Naive thymus-derived CD4-positive, alpha-beta T cell (primary cell): ENCODE measurements at regions of chr20 and their contacts with region 1.

Region 1: GRCh38 chr20:3051385-3052019 is 5.7 kb downstream of the MRPS26 start:
- DNase-seq: no peak
- ATAC-seq: peak; percentile 33
- H3K4me3 ChIP-seq: no peak overlapping the region
- H3K4me3 Mint-ChIP-seq: no peak overlapping the region
- H3K27ac ChIP-seq: no peak overlapping the region
- H3K27ac Mint-ChIP-seq: peak overlapping the region in 2 of 9 donors; percentile 22 to 32
- H3K4me1 ChIP-seq: peaks cover 0 to 5% of the 10 kb centered on the region in 2 donors
- H3K4me1 Mint-ChIP-seq: peaks cover 6 to 16% (median 14%) of the 10 kb centered on the region in 7 donors
- H3K27me3 ChIP-seq: no peaks in the 10 kb centered on the region
- H3K27me3 Mint-ChIP-seq: no peaks in the 10 kb centered on the region

Region 2: GRCh38 chr20:2706688-2707352 is 344.7 kb before region 1 on chr20:
- CTCF ChIA-PET with region 1: no interaction called
- POLR2A ChIA-PET with region 1: no interaction called
- intact Hi-C with region 1: no loop called
- DNase-seq: no peak
- ATAC-seq: no peak
- H3K4me3 ChIP-seq: no peak overlapping the region
- H3K4me3 Mint-ChIP-seq: peak overlapping the region in 1 of 10 donors; percentile 49
- H3K27ac ChIP-seq: no peak overlapping the region
- H3K27ac Mint-ChIP-seq: peak overlapping the region in 2 of 9 donors; percentile 76 to 82
- H3K4me1 ChIP-seq: no peaks in the 10 kb centered on the region
- H3K4me1 Mint-ChIP-seq: peaks cover 0 to 16% (median 0%) of the 10 kb centered on the region in 7 donors
- H3K27me3 ChIP-seq: no peaks in the 10 kb centered on the region
- H3K27me3 Mint-ChIP-seq: peaks cover 0 to 5% (median 0%) of the 10 kb centered on the region in 5 donors

Region 3: DNA sequence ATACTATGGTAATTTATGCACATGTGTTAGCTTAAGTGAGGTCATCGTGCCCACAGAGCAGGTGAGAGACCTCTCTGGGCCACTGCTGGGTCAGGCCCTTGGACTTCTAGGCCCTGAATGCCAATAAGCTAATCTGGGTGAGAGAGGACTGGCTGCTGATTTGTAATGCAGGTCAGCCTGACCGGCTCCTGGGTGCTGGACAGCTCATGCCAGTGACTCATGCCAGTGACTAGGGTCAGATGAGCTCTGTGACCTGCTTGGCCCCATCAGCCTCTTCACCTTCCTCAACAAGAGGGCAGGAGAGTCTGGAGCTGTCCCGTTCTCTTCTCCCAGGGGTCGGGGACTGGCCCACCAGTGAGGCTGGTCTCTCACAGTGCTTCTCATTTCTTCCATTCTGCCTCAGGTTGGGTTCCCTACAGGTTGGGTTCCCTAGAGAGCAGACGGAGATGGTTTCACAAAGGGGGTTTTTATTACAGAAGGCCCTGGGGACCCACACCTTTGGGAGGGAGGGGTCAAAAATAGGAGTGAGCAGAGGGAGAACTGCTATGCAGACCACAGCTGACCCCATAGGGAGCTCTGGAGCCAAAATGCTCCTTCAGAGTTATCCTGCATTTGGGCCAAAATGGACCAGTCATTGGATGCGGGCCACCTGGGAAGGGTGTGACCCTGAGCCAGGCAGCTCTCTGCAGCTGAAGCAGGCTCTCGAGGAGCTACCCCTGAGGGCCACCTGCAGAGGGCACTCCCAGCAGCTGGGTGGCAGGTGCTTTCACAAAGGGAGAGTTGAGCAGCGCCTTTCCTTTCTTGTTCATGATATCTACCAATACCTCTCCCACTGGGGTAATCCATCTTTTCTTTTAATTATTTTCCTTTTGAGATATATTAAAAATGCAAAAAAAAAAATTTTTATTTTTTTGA is 17.7 kb after region 1 on chr20:
- CTCF ChIA-PET with region 1: interaction called, 4 read pairs
- POLR2A ChIA-PET with region 1: interaction called, 4 read pairs
- intact Hi-C with region 1: loop called in 1 of 2 experiments (anchors 1 kb)
- DNase-seq: peak in 7 of 9 donors; percentile 52 to 73 (median 62)
- ATAC-seq: peak; percentile 61
- H3K4me3 ChIP-seq: no peak overlapping the region
- H3K4me3 Mint-ChIP-seq: peak overlapping the region in 1 of 10 donors; percentile 25
- H3K27ac ChIP-seq: no peak overlapping the region
- H3K27ac Mint-ChIP-seq: peak overlapping the region in 4 of 9 donors; percentile 32 to 77 (median 52)
- H3K4me1 ChIP-seq: peaks cover 0 to 17% of the 10 kb centered on the region in 2 donors
- H3K4me1 Mint-ChIP-seq: peaks cover 8 to 38% (median 27%) of the 10 kb centered on the region in 7 donors
- H3K27me3 ChIP-seq: no peaks in the 10 kb centered on the region
- H3K27me3 Mint-ChIP-seq: peaks cover 0 to 2% (median 0%) of the 10 kb centered on the region in 5 donors

Region 4: DNA sequence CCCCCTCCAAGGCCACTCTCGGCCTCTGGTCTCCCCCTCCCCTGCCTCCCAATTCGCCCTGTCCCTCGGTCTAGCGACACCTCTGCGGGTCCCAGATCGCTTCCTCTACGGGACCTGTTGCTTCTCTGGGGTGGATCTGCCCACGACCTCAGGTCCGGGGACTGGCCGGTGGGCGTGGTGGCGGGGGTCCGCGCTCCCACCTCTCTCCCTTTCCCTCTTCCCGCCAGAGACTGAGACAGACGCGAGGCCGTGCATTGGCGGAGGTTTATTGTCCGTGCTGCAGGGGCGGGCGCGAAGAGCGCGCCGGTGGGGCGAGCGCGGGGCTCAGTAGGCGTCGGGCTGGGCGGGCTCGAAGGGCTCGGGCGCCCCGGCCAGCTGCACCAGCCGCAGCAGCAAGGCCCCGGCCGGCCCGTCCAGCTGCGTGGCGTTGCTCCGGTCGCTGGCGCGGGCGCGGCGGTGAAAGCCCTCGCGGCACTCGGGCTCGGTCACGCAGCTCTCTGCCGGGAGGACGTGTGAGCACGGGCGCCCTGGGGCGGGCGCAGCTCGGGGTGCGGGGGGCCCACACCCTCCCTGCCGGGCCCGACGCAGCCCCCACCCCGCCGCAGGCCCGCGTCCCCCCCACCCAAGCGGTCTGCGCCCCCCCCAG is 30.9 kb after region 1 on chr20:
- CTCF ChIA-PET with region 1: no interaction called
- POLR2A ChIA-PET with region 1: interaction called, 4 read pairs
- intact Hi-C with region 1: loop called (anchors 1 kb)
- DNase-seq: peak in 1 of 9 donors; percentile 10
- ATAC-seq: peak; percentile 35
- H3K4me3 ChIP-seq: peak overlapping the region; percentile 24
- H3K4me3 Mint-ChIP-seq: peak overlapping the region; percentile 62 to 83 (median 72)
- H3K27ac ChIP-seq: no peak overlapping the region
- H3K27ac Mint-ChIP-seq: no peak overlapping the region
- H3K4me1 ChIP-seq: peaks cover 0 to 14% of the 10 kb centered on the region in 2 donors
- H3K4me1 Mint-ChIP-seq: peaks cover 11 to 19% (median 17%) of the 10 kb centered on the region in 7 donors
- H3K27me3 ChIP-seq: peaks cover 0 to 13% of the 10 kb centered on the region in 2 donors
- H3K27me3 Mint-ChIP-seq: peaks cover 8 to 62% (median 23%) of the 10 kb centered on the region in 5 donors

Region 5: DNA sequence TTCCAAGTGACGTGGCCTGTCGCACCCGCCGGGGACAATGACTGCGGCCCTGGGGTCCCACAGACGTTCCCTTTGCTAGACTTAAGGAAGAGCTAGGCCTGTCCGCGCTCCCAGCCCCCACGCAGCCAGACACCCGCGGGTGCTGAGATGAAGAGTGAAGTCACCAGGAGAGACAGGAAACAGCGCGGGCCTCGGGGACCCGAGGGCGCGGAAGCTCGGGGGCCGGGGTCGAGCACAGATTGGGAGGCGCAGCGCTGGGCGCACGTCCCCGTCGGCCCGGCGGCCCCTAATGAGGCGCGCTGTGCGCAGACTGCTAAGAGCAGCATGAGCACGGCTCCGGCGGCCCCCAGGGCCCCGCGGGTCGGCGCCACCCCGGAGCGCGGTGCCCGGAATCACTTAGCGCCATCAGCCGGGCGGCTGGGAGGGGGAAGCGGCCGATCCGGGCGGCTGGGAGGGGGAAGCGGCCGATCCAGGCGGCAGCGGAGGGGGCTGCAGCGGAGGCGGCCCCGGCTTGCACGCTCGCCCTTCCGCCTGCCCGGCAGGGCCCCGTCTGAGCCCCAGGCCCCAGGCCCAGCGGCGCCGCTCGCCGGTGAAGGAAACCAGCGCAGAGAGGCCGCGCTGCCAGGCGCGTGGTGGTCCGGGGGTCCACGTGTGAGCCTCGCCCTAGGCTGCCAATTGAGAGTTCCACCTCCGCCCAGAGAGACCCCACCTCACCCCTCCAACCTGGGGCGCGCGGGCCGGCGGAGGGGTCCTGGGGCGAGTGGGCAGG is 41.3 kb after region 1 on chr20:
- CTCF ChIA-PET with region 1: interaction called, 5 read pairs
- POLR2A ChIA-PET with region 1: interaction called, 6 read pairs
- intact Hi-C with region 1: loop called in 1 of 2 experiments (anchors 1 kb)
- DNase-seq: peak in 8 of 9 donors; percentile 41 to 75 (median 70)
- ATAC-seq: peak; percentile 27
- H3K4me3 ChIP-seq: peak overlapping the region; percentile 28
- H3K4me3 Mint-ChIP-seq: peak overlapping the region; percentile 78 to 97 (median 93)
- H3K27ac ChIP-seq: peak overlapping the region; percentile 95
- H3K27ac Mint-ChIP-seq: peak overlapping the region; percentile 88 to 100 (median 100)
- H3K4me1 ChIP-seq: peaks cover 0 to 24% of the 10 kb centered on the region in 2 donors
- H3K4me1 Mint-ChIP-seq: peaks cover 17 to 50% (median 31%) of the 10 kb centered on the region in 7 donors
- H3K27me3 ChIP-seq: no peaks in the 10 kb centered on the region
- H3K27me3 Mint-ChIP-seq: peaks cover 0 to 39% (median 0%) of the 10 kb centered on the region in 5 donors

Region 6: DNA sequence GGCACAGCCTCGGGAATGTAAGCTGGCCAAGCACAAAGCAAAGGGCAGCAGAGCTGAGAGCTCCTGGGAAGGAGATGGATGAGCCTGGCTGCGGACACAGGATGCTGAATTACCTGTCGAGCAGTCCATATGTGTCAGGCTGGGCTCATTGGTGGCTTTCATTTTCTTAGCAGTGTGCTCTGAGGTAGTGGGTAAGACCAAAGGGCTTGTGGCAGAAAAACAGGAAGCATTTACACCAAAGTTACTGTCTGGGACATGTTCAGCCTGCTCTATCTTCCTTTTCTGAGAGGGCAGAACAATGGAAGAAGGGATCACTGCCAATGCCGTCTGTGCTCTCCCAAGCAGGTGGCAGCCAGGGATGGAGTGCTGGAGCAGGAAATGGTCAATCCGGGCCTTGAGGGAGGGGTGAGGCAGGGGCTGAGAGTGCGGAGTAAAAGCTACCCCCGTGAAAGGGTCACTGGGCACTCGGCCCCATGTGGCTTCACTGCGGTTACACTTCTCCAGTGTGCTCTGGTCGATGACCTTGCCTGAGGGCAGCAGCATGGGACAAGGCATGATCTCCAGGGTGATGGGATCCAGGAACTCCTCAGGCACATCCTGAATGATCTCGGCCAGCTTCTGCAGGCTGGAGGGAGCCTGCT is 69.9 kb after region 1 on chr20:
- CTCF ChIA-PET with region 1: interaction called, 14 read pairs
- POLR2A ChIA-PET with region 1: interaction called, 5 read pairs
- intact Hi-C with region 1: no loop called
- DNase-seq: peak in 7 of 9 donors; percentile 49 to 75 (median 72)
- ATAC-seq: peak; percentile 85
- H3K4me3 ChIP-seq: peak overlapping the region; percentile 46
- H3K4me3 Mint-ChIP-seq: peak overlapping the region; percentile 68 to 91 (median 83)
- H3K27ac ChIP-seq: peak overlapping the region; percentile 82
- H3K27ac Mint-ChIP-seq: peak overlapping the region; percentile 97 to 100 (median 99)
- H3K4me1 ChIP-seq: peaks cover 5 to 37% of the 10 kb centered on the region in 2 donors
- H3K4me1 Mint-ChIP-seq: peaks cover 22 to 66% (median 51%) of the 10 kb centered on the region in 7 donors
- H3K27me3 ChIP-seq: no peaks in the 10 kb centered on the region
- H3K27me3 Mint-ChIP-seq: no peaks in the 10 kb centered on the region

Region 7: DNA sequence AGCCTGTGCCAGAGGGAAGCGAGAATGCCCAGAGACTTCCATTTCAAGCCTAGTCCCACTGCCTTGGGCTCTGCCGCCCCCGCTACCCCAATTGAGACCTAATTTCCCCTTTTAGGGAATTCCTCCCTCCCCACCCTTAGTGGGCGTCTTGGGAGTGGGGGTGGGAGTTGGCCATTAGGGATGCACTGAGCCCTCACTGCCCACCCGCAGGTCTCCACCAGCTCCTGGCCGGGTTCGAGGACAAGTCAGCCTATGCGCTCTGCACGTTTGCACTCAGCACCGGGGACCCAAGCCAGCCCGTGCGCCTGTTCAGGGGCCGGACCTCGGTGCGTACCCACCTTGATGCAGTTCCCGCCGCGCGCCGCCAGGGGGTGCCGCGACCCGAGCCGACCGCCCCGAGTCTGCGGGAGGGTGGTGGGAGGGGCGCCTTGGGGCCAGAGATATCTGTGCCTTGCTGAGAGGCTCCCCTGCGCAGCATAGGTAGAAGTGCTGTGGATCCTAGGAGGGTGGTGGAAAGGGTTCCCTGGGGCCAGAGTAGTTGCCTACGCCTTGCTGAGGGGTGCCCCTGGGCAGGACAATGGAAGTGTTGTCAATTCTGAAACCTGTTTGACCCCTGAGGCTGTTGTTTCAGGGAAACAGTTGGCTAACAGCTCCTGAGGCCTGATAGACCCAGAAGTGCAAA is 166.9 kb after region 1 on chr20:
- CTCF ChIA-PET with region 1: interaction called, 5 read pairs
- POLR2A ChIA-PET with region 1: interaction called, 3 read pairs
- intact Hi-C with region 1: loop called in 1 of 2 experiments (anchors 5 kb)
- DNase-seq: peak; percentile 59 to 82 (median 69)
- ATAC-seq: peak; percentile 89
- H3K4me3 ChIP-seq: no peak overlapping the region
- H3K4me3 Mint-ChIP-seq: peak overlapping the region in 1 of 10 donors; percentile 38
- H3K27ac ChIP-seq: no peak overlapping the region
- H3K27ac Mint-ChIP-seq: peak overlapping the region in 1 of 9 donors; percentile 65
- H3K4me1 ChIP-seq: peaks cover 0 to 15% of the 10 kb centered on the region in 2 donors
- H3K4me1 Mint-ChIP-seq: peaks cover 2 to 21% (median 16%) of the 10 kb centered on the region in 7 donors
- H3K27me3 ChIP-seq: no peaks in the 10 kb centered on the region
- H3K27me3 Mint-ChIP-seq: no peaks in the 10 kb centered on the region

Region 8: GRCh38 chr20:3312940-3313682 is 261.6 kb after region 1 on chr20:
- CTCF ChIA-PET with region 1: interaction called, 27 read pairs
- POLR2A ChIA-PET with region 1: interaction called, 3 read pairs
- intact Hi-C with region 1: loop called (anchors 1 kb)
- DNase-seq: no peak
- ATAC-seq: no peak
- H3K4me3 ChIP-seq: no peak overlapping the region
- H3K4me3 Mint-ChIP-seq: no peak overlapping the region
- H3K27ac ChIP-seq: no peak overlapping the region
- H3K27ac Mint-ChIP-seq: peak overlapping the region in 4 of 9 donors; percentile 20 to 67 (median 39)
- H3K4me1 ChIP-seq: no peaks in the 10 kb centered on the region
- H3K4me1 Mint-ChIP-seq: peaks cover 0 to 4% (median 0%) of the 10 kb centered on the region in 7 donors
- H3K27me3 ChIP-seq: no peaks in the 10 kb centered on the region
- H3K27me3 Mint-ChIP-seq: no peaks in the 10 kb centered on the region